Activated CD4-positive, alpha-beta T cell treated with anti-CD3 and anti-CD28 coated beads for 36 hours (primary cell): ENCODE measurements at regions of chr3 and their contacts with region 1.

Region 1: GRCh38 chr3:197906023-197906849 is 43.8 kb upstream of the RPL35A start:
- DNase-seq: peak; percentile 93
- ATAC-seq: peak; percentile 99
- H3K4me3 Mint-ChIP-seq: peak overlapping the region; percentile 41
- H3K27ac Mint-ChIP-seq: peak overlapping the region; percentile 86
- H3K4me1 Mint-ChIP-seq: peaks cover 25% of the 10 kb centered on the region
- H3K27me3 Mint-ChIP-seq: no peaks in the 10 kb centered on the region

Region 2: DNA sequence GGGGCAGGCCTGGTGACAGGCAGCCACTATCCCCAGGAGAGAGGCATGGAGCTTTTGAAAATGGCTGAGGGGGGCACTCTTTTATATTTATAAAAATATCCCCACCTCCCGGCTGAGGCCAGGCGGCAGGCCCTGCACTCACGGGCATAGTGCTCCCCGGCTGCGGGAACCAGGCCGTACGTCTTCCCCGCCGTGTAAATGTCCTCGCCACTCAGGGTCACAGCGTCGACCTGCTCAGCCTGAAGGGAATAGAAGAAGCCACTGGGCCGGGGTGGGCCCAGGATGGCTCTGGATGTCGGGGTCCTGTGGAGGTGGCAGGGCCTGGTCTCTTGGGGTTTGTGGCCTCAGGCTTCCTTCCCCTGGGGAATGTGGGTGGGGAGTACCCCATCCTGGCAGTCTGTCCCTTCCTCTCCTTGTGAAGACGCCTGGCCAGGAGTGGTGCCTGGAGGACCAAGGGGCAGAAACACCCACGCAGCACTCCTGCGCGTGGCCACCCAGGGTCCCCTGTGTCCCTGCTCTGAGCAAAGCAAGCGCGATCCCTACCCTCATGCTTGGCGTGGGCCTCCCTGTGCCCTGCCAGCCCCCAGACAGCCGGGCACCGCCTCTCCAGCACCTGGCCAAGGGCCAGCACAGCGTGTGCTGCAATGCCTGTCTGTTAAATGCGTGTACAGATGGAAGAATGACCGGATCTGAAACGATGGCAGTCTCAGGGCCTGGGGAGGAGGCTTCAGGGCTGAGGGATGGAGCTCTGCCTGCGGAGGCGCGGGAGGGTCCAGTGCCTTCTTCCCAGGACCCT is 895.5 kb before region 1 on chr3:
- CTCF ChIA-PET with region 1: no interaction called
- POLR2A ChIA-PET with region 1: no interaction called
- intact Hi-C with region 1: no loop called
- DNase-seq: no peak
- ATAC-seq: no peak
- H3K4me3 Mint-ChIP-seq: no peak overlapping the region
- H3K27ac Mint-ChIP-seq: no peak overlapping the region
- H3K4me1 Mint-ChIP-seq: no peaks in the 10 kb centered on the region
- H3K27me3 Mint-ChIP-seq: no peaks in the 10 kb centered on the region

Region 3: GRCh38 chr3:197068077-197068476 is 838.2 kb before region 1 on chr3:
- CTCF ChIA-PET with region 1: no interaction called
- POLR2A ChIA-PET with region 1: no interaction called
- intact Hi-C with region 1: no loop called
- DNase-seq: no peak
- ATAC-seq: no peak
- H3K4me3 Mint-ChIP-seq: no peak overlapping the region
- H3K27ac Mint-ChIP-seq: no peak overlapping the region
- H3K4me1 Mint-ChIP-seq: no peaks in the 10 kb centered on the region
- H3K27me3 Mint-ChIP-seq: no peaks in the 10 kb centered on the region

Region 4: DNA sequence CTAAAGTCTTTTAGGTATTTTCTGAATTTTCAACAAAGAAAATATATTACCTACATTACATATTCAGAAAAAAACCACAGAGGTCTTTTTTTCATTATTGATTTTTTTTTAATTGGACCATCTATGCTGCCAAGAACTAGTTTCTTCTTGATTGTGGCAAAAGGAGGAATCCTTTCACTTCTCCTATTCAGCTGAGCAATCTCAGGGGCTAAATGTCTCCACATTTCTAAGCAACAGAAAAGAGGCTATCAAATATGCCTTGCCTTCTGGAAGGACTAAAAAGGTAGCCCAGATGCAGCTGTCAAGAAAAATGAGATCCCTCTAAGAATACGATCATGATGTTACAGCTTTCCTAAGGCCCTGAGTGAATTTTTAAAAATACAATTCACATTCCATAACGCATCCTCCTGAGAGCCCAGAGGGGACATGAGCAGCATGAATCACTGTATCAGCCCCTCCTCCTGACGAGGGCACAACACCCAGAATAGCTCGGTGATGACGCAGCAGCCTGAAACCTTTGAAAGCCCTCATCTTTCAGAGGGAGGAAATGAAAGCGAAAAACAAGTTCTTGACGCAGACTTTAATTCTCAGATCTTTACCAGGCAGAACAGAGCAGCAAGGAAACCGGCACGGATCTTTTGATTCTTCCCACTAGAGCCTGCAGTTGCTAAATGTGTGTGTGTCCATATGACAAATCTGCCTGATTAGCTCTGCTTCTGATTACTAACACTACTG is 194.1 kb before region 1 on chr3:
- CTCF ChIA-PET with region 1: interaction called, 4 read pairs
- POLR2A ChIA-PET with region 1: no interaction called
- intact Hi-C with region 1: loop called (anchors 1 kb)
- DNase-seq: peak; percentile 94
- ATAC-seq: peak; percentile 98
- H3K4me3 Mint-ChIP-seq: peak overlapping the region; percentile 51
- H3K27ac Mint-ChIP-seq: peak overlapping the region; percentile 89
- H3K4me1 Mint-ChIP-seq: peaks cover 36% of the 10 kb centered on the region
- H3K27me3 Mint-ChIP-seq: no peaks in the 10 kb centered on the region

Region 5: DNA sequence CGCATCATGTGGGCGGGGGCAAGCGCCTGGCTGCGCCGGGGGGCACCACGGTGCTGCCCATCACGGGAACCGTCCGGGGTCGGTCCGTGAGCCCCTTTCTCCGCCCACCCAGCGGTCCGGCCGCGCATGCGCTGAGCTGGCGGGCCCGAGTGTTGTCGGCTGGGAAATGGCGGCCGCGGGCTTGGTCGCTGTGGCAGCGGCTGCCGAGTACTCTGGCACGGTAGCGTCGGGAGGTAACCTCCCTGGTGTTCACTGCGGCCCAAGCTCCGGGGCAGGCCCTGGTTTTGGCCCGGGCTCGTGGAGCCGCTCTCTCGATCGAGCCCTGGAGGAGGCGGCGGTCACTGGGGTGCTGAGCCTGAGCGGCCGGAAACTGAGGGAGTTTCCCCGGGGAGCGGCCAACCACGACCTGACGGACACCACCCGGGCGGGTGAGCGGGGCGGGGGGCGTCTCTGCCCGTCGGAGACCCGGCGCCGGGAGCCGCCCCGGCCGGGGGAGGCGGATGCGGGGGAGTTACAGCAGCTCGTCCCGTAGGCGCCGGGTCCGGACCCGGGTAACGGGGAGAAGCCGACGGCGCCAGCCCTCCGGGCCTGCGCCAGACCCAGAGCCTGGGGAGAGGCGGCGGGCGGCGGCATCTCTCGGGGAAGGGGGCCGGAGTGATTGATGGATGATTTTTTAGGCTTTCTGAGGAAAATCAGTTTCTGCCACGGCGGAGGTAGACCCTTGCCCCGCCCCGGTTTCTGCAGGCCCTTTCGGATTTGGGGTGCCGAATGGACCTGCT is 114.9 kb before region 1 on chr3 and contains the start of gene LRCH3:
- CTCF ChIA-PET with region 1: no interaction called
- POLR2A ChIA-PET with region 1: no interaction called
- intact Hi-C with region 1: loop called in 1 of 2 experiments (anchors 1 kb)
- DNase-seq: peak; percentile 88
- ATAC-seq: peak; percentile 70
- H3K4me3 Mint-ChIP-seq: peak within 1 kb of the TSS; percentile 97
- H3K27ac Mint-ChIP-seq: peak within 1 kb of the TSS; percentile 97
- H3K4me1 Mint-ChIP-seq: peaks cover 48% of the 10 kb centered on the region
- H3K27me3 Mint-ChIP-seq: no peaks in the 10 kb centered on the region
- total RNA-seq, gene LRCH3: 43.6 to 77.5 TPM

Region 6: GRCh38 chr3:197866035-197866434 is 40.2 kb before region 1 on chr3:
- CTCF ChIA-PET with region 1: no interaction called
- POLR2A ChIA-PET with region 1: no interaction called
- intact Hi-C with region 1: no loop called
- DNase-seq: no peak
- ATAC-seq: no peak
- H3K4me3 Mint-ChIP-seq: no peak overlapping the region
- H3K27ac Mint-ChIP-seq: no peak overlapping the region
- H3K4me1 Mint-ChIP-seq: peaks cover 12% of the 10 kb centered on the region
- H3K27me3 Mint-ChIP-seq: no peaks in the 10 kb centered on the region

Region 7: GRCh38 chr3:197889204-197889930 is 16.9 kb before region 1 on chr3:
- CTCF ChIA-PET with region 1: interaction called, 4 read pairs
- POLR2A ChIA-PET with region 1: no interaction called
- intact Hi-C with region 1: loop called in 1 of 2 experiments (anchors 1 kb)
- DNase-seq: no peak
- ATAC-seq: peak; percentile 91
- H3K4me3 Mint-ChIP-seq: no peak overlapping the region
- H3K27ac Mint-ChIP-seq: no peak overlapping the region
- H3K4me1 Mint-ChIP-seq: peaks cover 19% of the 10 kb centered on the region
- H3K27me3 Mint-ChIP-seq: no peaks in the 10 kb centered on the region

Region 8: GRCh38 chr3:197942956-197943556 is 36.8 kb after region 1 on chr3:
- CTCF ChIA-PET with region 1: interaction called, 28 read pairs
- POLR2A ChIA-PET with region 1: interaction called, 3 read pairs
- intact Hi-C with region 1: loop called (anchors 1 kb)
- DNase-seq: peak; percentile 49
- ATAC-seq: peak; percentile 85
- H3K4me3 Mint-ChIP-seq: no peak overlapping the region
- H3K27ac Mint-ChIP-seq: no peak overlapping the region
- H3K4me1 Mint-ChIP-seq: peaks cover 2% of the 10 kb centered on the region
- H3K27me3 Mint-ChIP-seq: no peaks in the 10 kb centered on the region

Region 9: GRCh38 chr3:197959898-197960693 is 53.9 kb after region 1 on chr3 and contains the start of gene LMLN:
- CTCF ChIA-PET with region 1: interaction called, 3 read pairs
- POLR2A ChIA-PET with region 1: no interaction called
- intact Hi-C with region 1: loop called (anchors 1 kb)
- DNase-seq: peak; percentile 98
- ATAC-seq: peak; percentile 91
- H3K4me3 Mint-ChIP-seq: peak within 1 kb of the TSS; percentile 84
- H3K27ac Mint-ChIP-seq: peak within 1 kb of the TSS; percentile 96
- H3K4me1 Mint-ChIP-seq: peaks cover 52% of the 10 kb centered on the region
- H3K27me3 Mint-ChIP-seq: no peaks in the 10 kb centered on the region
- total RNA-seq, gene LMLN: 4.3 to 7.7 TPM

Region 10: GRCh38 chr3:198071602-198072285 is 165.5 kb after region 1 on chr3:
- CTCF ChIA-PET with region 1: interaction called, 3 read pairs
- POLR2A ChIA-PET with region 1: no interaction called
- intact Hi-C with region 1: loop called (anchors 1 kb)
- DNase-seq: peak; percentile 77
- ATAC-seq: peak; percentile 100
- H3K4me3 Mint-ChIP-seq: peak overlapping the region; percentile 36
- H3K27ac Mint-ChIP-seq: peak overlapping the region; percentile 95
- H3K4me1 Mint-ChIP-seq: peaks cover 43% of the 10 kb centered on the region
- H3K27me3 Mint-ChIP-seq: peaks cover 12% of the 10 kb centered on the region